Posterior vena cava (tissue), 2 donors: ENCODE measurements at regions of chr19 and their contacts with region 1.

Region 1: GRCh38 chr19:42191855-42192254 is 25.6 kb downstream of the DEDD2 start:
- DNase-seq: no peak

Region 2: DNA sequence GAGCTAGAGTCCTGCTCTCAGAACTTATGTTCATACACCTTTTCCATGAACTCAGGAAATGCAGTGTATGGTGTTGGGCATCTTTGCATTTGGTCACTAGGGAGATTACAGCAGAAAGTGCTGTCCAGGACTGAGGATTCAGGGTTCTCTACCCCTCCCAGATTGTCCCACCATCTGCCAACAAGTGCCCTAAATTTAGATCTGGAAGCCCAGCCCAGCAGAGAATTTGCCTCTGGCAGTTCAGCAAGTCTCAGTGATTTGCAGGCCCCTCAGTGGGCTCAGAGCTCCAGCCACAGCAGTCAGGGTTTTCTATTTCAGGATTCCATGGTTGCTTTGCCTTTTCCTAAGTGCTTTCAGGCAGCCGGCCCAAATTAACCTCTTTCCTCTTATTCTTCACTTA is 174.8 kb after region 1 on chr19:
- intact Hi-C with region 1: loop called in 1 of 2 experiments (anchors 5 kb)
- DNase-seq: no peak